Activated T-helper 2 cell treated with anti-CD3 and anti-CD28 coated beads, Interferon-gamma antibody, Interleukin-2, Interleukin-4, amounts not matched to agents 10 μg/mL and 5 μg/mL and 100 μg/mL, durations not matched to agents 14 hours and 24 hours and 36 hours (primary cell): ENCODE measurements at regions of chr19 and their contacts with region 1.

Region 1: GRCh38 chr19:36915992-36916830 is at the starts of genes ZNF568 and ZNF829:
- DNase-seq: peak; percentile 92
- H3K4me3 Mint-ChIP-seq: peak within 1 kb of the TSS; percentile 90
- H3K27ac Mint-ChIP-seq: peak within 1 kb of the TSS; percentile 93
- H3K4me1 Mint-ChIP-seq: peaks cover 20% of the 10 kb centered on the region
- H3K27me3 Mint-ChIP-seq: no peaks in the 10 kb centered on the region
- total RNA-seq, gene ZNF568: 4.5 and 6.3 TPM in 2 replicates
- total RNA-seq, gene ZNF829: 3.4 and 3.5 TPM in 2 replicates

Region 2: DNA sequence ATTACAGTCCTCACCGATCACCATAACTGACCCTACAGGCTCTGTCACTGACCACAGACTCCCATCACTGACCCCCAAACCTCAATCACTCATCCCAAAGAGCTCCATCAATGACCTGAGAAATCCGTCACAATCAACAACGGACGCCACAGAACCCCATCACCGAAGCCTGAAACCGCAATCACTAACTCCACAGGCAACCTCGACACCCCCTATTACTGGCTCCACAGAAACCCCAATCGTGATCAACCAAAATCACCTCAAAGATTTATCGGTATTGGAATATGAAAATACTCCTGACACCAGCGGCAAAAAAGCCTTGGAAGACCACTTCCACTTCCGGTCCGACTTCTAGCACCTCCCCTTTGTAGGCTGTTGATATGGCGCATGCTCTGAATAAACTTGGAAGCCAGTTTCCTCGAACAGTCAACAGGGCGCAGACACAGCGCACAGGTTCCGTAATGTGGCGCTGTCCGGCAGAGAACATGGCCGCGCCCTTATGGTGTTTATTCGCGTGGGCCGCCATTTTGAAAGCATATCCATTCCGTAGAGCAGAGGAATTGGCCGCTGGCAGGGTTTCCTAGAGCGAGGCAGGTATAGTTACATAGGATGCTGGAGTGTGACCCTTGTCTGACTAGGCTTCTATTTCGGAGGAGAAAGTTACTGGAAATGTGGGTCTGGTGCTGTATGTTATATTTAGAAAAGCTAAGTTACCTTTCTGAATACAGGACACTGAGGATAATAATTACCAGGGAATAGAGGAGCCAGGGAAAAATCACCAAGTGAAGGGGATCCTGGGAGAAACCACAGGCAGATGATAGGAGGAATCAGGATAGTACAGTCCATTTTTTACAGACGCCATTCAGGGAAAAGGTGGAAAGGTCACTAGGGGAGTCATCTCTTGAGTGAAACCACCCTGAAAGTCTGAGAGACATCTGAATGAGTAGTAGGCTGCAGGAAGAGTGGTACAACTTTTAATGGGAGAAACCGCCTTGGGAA is 256.5 kb after region 1 on chr19 and contains the start of gene ZNF585A:
- intact Hi-C with region 1: loop called (anchors 5 kb)
- DNase-seq: peak; percentile 82
- H3K4me3 Mint-ChIP-seq: no peak within 1 kb of the TSS
- H3K27ac Mint-ChIP-seq: no peak within 1 kb of the TSS
- H3K4me1 Mint-ChIP-seq: no peaks in the 10 kb centered on the region
- H3K27me3 Mint-ChIP-seq: no peaks in the 10 kb centered on the region
- total RNA-seq, gene ZNF585A: 4.1 and 4.2 TPM in 2 replicates